Esophagus squamous epithelium (tissue), 5 donors: ENCODE measurements at regions of chr6 and their contacts with region 1.

Region 1: GRCh38 chr6:19024737-19025136 is 637.6 kb downstream of the RNF144B start:
- DNase-seq: no peak
- H3K4me3 ChIP-seq: no peak overlapping the region
- H3K27ac ChIP-seq: no peak overlapping the region
- H3K4me1 ChIP-seq: peaks cover 0 to 5% (median 0%) of the 10 kb centered on the region in 3 donors
- H3K27me3 ChIP-seq: no peaks in the 10 kb centered on the region
- CTCF ChIP-seq: peak in 5 of 6 experiments; percentile 40 to 72 (median 43)
- POLR2A ChIP-seq: no peak

Region 2: GRCh38 chr6:19851241-19852089 is 826.7 kb after region 1 on chr6:
- intact Hi-C with region 1: loop called (anchors 10 kb)
- DNase-seq: no peak
- H3K4me3 ChIP-seq: peak overlapping the region in 1 of 4 donors; percentile 37
- H3K27ac ChIP-seq: peak overlapping the region; percentile 29 to 77 (median 64)
- H3K4me1 ChIP-seq: peaks cover 0 to 13% (median 9%) of the 10 kb centered on the region in 3 donors
- H3K27me3 ChIP-seq: no peaks in the 10 kb centered on the region
- CTCF ChIP-seq: peak in 5 of 6 experiments; percentile 72 to 91 (median 86)
- POLR2A ChIP-seq: no peak